ENCODE measurements at regions of chr19 and their contacts with region 1.

Region 1: GRCh38 chr19:32373585-32374295 is 28.3 kb downstream of the ZNF507 start:
- DNase-seq: peak; percentile 66 to 70
- ATAC-seq: peak; percentile 100
- H3K4me3 ChIP-seq: peak overlapping the region in 1 of 4 donors; percentile 0
- H3K27ac ChIP-seq: peak overlapping the region; percentile 69 to 82 (median 75)
- H3K4me1 ChIP-seq: peaks cover 20 to 21% of the 10 kb centered on the region in 2 donors
- H3K27me3 ChIP-seq: no peaks in the 10 kb centered on the region
- CTCF ChIP-seq: no peak
- POLR2A ChIP-seq: no peak

Region 2: DNA sequence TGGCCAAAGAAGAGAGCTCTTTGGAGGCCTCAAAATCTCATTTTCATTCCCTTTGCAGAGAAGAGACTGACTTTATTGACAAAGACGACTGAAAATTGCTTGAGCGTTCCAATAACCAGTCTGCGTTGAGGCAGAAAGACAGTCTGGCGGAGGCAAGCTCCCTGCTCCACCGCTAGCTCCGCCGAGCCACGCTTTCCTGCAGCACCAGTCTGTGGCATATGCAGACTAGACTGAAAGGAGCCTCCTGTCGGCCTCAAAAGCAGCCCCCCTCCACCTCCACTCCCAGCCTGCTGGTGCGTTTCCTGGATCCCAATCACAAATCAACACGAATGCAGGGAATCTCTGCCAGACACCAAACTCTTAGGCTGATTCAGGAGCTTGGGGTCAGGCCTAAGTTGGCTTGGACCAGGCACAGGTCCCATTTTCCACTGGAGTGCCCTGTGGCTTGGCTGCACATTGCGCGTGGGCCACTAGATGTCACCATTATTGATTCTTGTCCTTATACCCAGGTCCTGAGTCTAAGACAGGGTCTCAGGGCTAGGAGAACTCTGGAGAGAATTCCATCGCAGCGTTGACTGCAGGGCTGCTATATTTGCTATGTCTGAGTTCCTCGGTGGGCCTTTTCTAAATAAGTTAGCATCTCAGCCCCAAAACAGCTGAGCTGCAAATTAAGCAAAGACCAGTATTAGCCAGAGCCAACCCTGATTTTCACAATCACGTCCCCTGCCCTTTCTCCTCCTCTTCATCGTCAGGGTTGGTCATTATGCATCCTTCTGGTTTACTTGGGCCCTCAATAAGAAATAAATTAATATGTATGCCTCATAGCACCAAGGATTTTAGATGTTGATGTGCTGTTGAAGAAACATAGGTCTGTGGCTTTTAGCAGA is 33.5 kb before region 1 on chr19:
- in situ Hi-C with region 1: no loop called
- intact Hi-C with region 1: loop called (anchors 5 kb)
- DNase-seq: peak in 1 of 2 donors; percentile 48
- ATAC-seq: peak; percentile 46 to 79
- H3K4me3 ChIP-seq: no peak overlapping the region
- H3K27ac ChIP-seq: no peak overlapping the region
- H3K4me1 ChIP-seq: no peaks in the 10 kb centered on the region
- H3K27me3 ChIP-seq: no peaks in the 10 kb centered on the region
- CTCF ChIP-seq: peak; percentile 36 to 73 (median 60)
- POLR2A ChIP-seq: no peak

Region 3: DNA sequence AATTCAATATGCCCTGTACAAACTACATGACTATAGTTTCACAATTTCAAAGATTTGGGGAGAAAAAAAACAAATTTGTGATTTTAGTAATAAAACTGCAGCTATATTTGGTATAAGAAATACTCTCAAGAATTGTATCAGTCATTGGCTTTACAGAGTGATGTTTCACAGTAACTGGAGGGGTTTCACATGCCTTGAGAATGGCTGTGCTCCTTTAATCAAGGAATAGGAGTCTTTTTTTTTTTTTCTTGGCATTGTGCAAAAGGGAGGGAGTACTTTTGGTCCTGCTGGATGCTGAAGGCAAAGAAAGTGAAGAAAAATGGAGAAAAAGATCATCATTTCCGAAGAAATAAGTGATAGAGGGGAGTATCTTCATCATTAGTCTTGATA is 21.5 kb before region 1 on chr19:
- in situ Hi-C with region 1: no loop called
- intact Hi-C with region 1: loop called (anchors 2 kb)
- DNase-seq: no peak
- ATAC-seq: no peak
- H3K4me3 ChIP-seq: no peak overlapping the region
- H3K27ac ChIP-seq: peak overlapping the region; percentile 83 to 90 (median 88)
- H3K4me1 ChIP-seq: peaks cover 38 to 41% of the 10 kb centered on the region in 2 donors
- H3K27me3 ChIP-seq: no peaks in the 10 kb centered on the region
- CTCF ChIP-seq: no peak
- POLR2A ChIP-seq: no peak

Region 4: DNA sequence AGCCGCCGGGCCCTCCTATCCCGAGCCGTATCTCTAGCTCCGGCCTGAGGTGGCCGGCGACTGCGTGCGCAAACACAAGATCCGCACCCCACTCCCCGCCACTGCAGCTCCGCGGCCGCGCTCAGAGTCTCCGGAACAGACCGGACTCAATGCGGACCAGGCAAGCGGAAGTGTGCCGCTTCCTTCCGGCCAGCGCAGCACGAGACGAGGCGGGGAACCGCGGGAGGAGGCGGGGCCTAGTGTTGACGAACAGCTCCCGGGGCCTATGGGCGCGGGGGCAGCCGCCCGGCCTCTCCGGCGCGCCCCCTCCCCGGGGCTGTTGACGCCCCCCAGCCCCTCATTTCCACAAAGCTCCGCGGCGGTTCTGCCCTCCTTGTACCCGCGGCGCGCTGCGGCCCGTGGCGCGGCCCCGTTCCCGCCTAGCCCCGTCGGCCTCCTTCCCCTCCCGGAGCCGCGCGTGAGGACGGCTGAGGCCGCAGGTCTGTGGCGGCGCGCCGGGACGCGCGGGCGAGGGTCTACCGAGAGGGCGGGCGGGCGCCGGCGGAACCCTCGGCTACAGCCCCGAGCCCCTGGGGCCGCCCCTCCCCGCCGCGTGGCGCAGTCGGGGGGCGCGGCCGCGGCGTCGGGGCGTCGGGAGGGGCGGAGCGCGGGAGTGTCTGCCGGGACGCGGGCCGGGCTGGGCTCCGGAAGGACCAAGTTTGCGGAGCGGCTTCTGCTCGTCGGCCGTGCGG is 31.9 kb after region 1 on chr19 and contains the start of gene DPY19L3:
- in situ Hi-C with region 1: no loop called
- intact Hi-C with region 1: loop called (anchors 2 kb)
- DNase-seq: peak; percentile 94
- ATAC-seq: peak; percentile 98 to 99
- H3K4me3 ChIP-seq: peak within 1 kb of the TSS; percentile 74 to 99 (median 90)
- H3K27ac ChIP-seq: peak within 1 kb of the TSS; percentile 98 to 100 (median 98)
- H3K4me1 ChIP-seq: peaks cover 12 to 20% of the 10 kb centered on the region in 2 donors
- H3K27me3 ChIP-seq: no peaks in the 10 kb centered on the region
- CTCF ChIP-seq: no peak
- POLR2A ChIP-seq: peak; percentile 90 to 96
- total RNA-seq, gene DPY19L3: 2.3 to 9.9 (median 7.5) TPM

Region 5: DNA sequence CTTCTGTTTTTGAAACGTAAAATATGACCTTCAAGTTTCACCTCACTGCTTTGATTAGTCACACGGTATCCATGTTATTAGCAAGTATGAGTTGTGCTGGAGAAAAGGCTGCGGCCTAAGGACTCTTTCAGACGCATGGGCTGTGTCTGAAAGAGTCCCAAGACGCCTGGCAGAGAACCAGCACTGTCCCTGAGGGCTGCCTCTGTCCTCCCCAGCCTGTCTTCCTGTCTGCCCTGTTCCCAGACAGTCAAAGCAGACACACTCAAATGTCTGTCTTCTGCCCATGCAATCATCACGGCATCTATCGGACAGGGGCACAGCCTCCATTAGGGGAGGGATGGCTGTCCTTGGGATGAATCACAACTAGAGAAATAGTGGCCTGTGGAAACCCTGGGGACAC is 97.4 kb after region 1 on chr19:
- in situ Hi-C with region 1: no loop called
- intact Hi-C with region 1: no loop called
- DNase-seq: no peak
- ATAC-seq: no peak
- H3K4me3 ChIP-seq: no peak overlapping the region
- H3K27ac ChIP-seq: no peak overlapping the region
- H3K4me1 ChIP-seq: no peaks in the 10 kb centered on the region
- H3K27me3 ChIP-seq: no peaks in the 10 kb centered on the region
- CTCF ChIP-seq: no peak
- POLR2A ChIP-seq: no peak

Region 6: GRCh38 chr19:32674959-32675719 is 301.4 kb after region 1 on chr19 and contains the start of gene ANKRD27:
- in situ Hi-C with region 1: loop called in 1 of 4 experiments (anchors 25 kb)
- intact Hi-C with region 1: no loop called
- DNase-seq: peak; percentile 97 to 99
- ATAC-seq: peak; percentile 85 to 87
- H3K4me3 ChIP-seq: peak within 1 kb of the TSS; percentile 69 to 95 (median 82)
- H3K27ac ChIP-seq: peak within 1 kb of the TSS; percentile 88 to 97 (median 94)
- H3K4me1 ChIP-seq: peaks cover 31 to 46% of the 10 kb centered on the region in 2 donors
- H3K27me3 ChIP-seq: peaks cover 0 to 2% (median 0%) of the 10 kb centered on the region in 3 donors
- CTCF ChIP-seq: no peak
- POLR2A ChIP-seq: peak; percentile 90 to 95
- total RNA-seq, gene ANKRD27: 36.4 to 78.3 (median 53.5) TPM